IMR-90 (cell line): ENCODE measurements at regions of chr1 and their contacts with region 1.

Region 1: GRCh38 chr1:212477014-212477679 is 44.4 kb downstream of the NENF start:
- DNase-seq: peak; percentile 86
- ATAC-seq: peak; percentile 98
- H3K4me3 ChIP-seq: no peak overlapping the region
- H3K27ac ChIP-seq: no peak overlapping the region
- H3K4me1 ChIP-seq: peaks cover 3% of the 10 kb centered on the region
- H3K27me3 ChIP-seq: peaks cover 4% of the 10 kb centered on the region; the same call in 1 of the 2 replicates
- CTCF ChIP-seq: peak; percentile 95
- POLR2A ChIP-seq: peak; percentile 56
- RAD21 ChIP-seq: peak; percentile 97

Region 2: GRCh38 chr1:212558693-212559480 is 81.7 kb after region 1 on chr1:
- CTCF ChIA-PET with region 1: no interaction called
- POLR2A ChIA-PET with region 1: no interaction called
- dilution Hi-C with region 1: no loop called
- in situ Hi-C with region 1: no loop called
- intact Hi-C with region 1: loop called (anchors 5 kb)
- DNase-seq: peak; percentile 93
- ATAC-seq: peak; percentile 87
- H3K4me3 ChIP-seq: peak overlapping the region; percentile 56
- H3K27ac ChIP-seq: peak overlapping the region; percentile 73
- H3K4me1 ChIP-seq: peaks cover 9% of the 10 kb centered on the region
- H3K27me3 ChIP-seq: no peaks in the 10 kb centered on the region
- CTCF ChIP-seq: 0 out of 2 replicates have a peak, but pooled peaks have one; percentile 3
- POLR2A ChIP-seq: peak; percentile 63; the same call in 1 of the 2 replicates
- RAD21 ChIP-seq: peak; percentile 8; the same call in 1 of the 2 replicates

Region 3: DNA sequence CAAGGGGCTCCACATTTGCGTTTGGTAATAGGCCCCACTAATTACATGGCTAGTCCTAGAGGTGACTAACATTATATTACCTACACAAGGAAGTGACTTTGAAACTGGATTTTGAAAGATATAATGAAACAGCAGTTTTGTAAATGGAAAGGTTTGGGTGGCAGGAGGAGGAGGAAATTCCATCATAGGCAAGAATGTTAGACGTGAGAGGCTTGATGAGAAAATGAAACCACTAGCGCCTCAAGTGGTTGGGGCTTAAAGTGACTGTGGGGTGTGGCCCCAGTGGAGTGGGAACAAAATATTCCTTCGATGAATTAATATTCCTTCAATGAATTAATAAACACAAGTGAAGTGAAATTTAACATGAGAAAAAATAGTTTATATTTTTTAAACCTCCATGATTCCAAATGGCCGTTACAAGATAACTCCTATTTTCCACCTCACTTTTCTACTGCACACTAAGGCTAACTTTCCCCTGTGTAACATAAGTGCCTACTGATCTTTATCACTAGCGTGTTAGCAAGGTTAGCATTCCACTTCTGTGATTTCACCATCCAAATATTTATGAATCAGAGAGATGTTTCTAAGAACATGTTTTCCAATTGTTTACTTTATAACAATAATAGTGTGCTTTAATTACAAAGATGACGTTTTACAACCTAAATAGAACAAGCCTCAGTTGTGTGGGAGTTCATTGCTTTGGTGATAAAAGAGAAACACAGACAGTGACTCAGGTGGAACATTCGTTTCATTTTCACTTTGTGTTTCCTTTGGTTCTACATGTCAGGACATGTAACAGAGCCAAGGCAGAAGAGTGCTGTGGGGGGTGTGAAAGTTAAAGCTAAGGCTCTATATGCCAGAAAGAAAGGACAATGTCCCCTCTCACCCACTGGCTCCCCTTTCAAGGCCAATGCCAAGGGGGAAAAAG is 118.9 kb after region 1 on chr1:
- CTCF ChIA-PET with region 1: no interaction called
- POLR2A ChIA-PET with region 1: no interaction called
- dilution Hi-C with region 1: no loop called
- in situ Hi-C with region 1: loop called (anchors 5 kb)
- intact Hi-C with region 1: loop called (anchors 1 kb)
- DNase-seq: peak; percentile 99
- ATAC-seq: peak; percentile 90
- H3K4me3 ChIP-seq: peak overlapping the region; percentile 31; the same call in 1 of the 2 replicates
- H3K27ac ChIP-seq: peak overlapping the region; percentile 98
- H3K4me1 ChIP-seq: peaks cover 10% of the 10 kb centered on the region
- H3K27me3 ChIP-seq: peaks cover 9% of the 10 kb centered on the region
- CTCF ChIP-seq: peak; percentile 75
- POLR2A ChIP-seq: peak; percentile 14; the same call in 1 of the 2 replicates
- RAD21 ChIP-seq: peak; percentile 68

Region 4: DNA sequence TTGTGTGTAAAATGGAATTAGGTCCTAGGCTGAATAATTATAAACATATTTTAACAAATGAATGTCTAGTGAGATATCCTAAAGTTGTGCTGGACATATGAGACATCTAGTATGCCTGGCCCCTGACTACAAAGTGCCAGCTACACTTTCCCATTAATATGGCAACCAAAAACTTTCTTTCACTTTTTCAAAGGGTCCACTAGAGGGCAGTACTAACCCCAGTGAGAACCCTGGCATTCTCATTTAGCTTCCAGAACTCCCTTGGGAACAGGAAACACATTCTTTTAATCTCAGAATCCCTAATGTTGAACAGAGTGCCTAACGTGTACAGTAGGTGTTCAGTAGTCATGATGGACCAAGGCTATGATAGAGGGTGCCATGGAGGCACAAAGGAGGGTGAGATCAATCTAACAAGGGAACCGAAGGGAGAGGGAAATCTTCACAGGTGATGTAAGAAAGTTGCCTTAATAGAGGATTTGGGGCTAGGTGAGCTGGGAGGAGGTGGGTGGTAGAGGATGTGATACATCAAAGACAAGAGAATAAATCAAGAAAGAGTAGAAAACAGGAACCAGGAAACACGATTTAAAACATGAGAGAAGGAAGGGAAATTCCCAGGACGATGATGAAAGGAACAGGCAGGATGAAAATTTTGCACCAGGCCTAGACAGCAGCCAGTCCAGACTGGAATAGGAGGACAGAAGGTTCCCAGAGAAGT is 272.8 kb after region 1 on chr1:
- CTCF ChIA-PET with region 1: no interaction called
- POLR2A ChIA-PET with region 1: no interaction called
- dilution Hi-C with region 1: no loop called
- in situ Hi-C with region 1: no loop called
- intact Hi-C with region 1: loop called (anchors 10 kb)
- DNase-seq: peak; percentile 79
- ATAC-seq: peak; percentile 85
- H3K4me3 ChIP-seq: no peak overlapping the region
- H3K27ac ChIP-seq: peak overlapping the region; percentile 78; the same call in 1 of the 2 replicates
- H3K4me1 ChIP-seq: peaks cover 8% of the 10 kb centered on the region
- H3K27me3 ChIP-seq: no peaks in the 10 kb centered on the region
- CTCF ChIP-seq: peak; percentile 73
- POLR2A ChIP-seq: no peak
- RAD21 ChIP-seq: peak; percentile 60

Region 5: GRCh38 chr1:212777151-212777550 is 300.0 kb after region 1 on chr1:
- CTCF ChIA-PET with region 1: interaction called, 4 read pairs
- POLR2A ChIA-PET with region 1: no interaction called
- dilution Hi-C with region 1: no loop called
- in situ Hi-C with region 1: loop called (anchors 5 kb)
- intact Hi-C with region 1: loop called (anchors 1 kb)
- DNase-seq: no peak
- ATAC-seq: no peak
- H3K4me3 ChIP-seq: no peak overlapping the region
- H3K27ac ChIP-seq: no peak overlapping the region
- H3K4me1 ChIP-seq: peaks cover 3% of the 10 kb centered on the region; the same call in 1 of the 2 replicates
- H3K27me3 ChIP-seq: no peaks in the 10 kb centered on the region
- CTCF ChIP-seq: no peak
- POLR2A ChIP-seq: no peak
- RAD21 ChIP-seq: no peak

Region 6: DNA sequence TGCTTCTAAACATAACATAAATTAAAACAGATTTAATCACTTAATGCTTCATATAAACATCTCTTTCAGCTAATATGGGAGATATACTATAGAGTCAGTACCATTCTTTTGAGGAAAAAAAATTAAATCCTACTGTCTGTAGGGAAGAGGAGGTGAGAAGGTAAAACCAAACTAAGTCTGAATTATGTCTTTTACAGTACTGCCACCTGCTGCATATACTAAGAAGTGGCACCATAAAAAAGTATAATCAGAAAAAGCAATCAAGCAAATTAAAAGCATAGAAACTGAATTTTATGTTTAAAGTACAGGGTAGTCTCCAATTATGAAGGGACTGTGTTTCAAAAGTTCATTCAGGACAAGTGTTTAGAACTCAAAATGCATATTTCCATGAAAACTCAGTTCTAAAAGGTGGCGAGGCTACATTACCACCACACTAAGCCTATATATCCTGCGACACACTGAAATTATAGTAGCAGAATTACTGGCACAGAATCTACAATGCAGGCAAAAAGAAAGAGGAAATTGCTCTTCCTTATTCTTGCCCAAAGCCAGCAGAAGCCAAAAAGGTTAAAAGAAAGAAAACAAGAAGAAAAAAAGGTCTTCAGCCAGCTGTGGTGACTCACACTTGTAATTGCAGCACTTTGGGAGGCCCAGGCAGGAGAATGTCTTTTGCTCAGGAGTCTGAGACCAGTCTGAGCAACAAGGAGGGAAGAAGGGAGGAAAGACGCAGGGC is 305.4 kb after region 1 on chr1:
- CTCF ChIA-PET with region 1: interaction called, 6 read pairs
- POLR2A ChIA-PET with region 1: no interaction called
- dilution Hi-C with region 1: no loop called
- in situ Hi-C with region 1: loop called (anchors 5 kb)
- intact Hi-C with region 1: loop called (anchors 1 kb)
- DNase-seq: peak; percentile 69
- ATAC-seq: peak; percentile 81
- H3K4me3 ChIP-seq: no peak overlapping the region
- H3K27ac ChIP-seq: no peak overlapping the region
- H3K4me1 ChIP-seq: 0 out of 2 replicates have a peak, but pooled peaks cover 2% of the 10 kb centered on the region
- H3K27me3 ChIP-seq: no peaks in the 10 kb centered on the region
- CTCF ChIP-seq: peak; percentile 72
- POLR2A ChIP-seq: no peak
- RAD21 ChIP-seq: peak; percentile 77

Region 7: GRCh38 chr1:212990276-212990675 is 513.1 kb after region 1 on chr1:
- CTCF ChIA-PET with region 1: no interaction called
- POLR2A ChIA-PET with region 1: no interaction called
- dilution Hi-C with region 1: no loop called
- in situ Hi-C with region 1: no loop called
- intact Hi-C with region 1: loop called (anchors 1 kb)
- DNase-seq: no peak
- ATAC-seq: no peak
- H3K4me3 ChIP-seq: no peak overlapping the region
- H3K27ac ChIP-seq: no peak overlapping the region
- H3K4me1 ChIP-seq: peaks cover 6% of the 10 kb centered on the region
- H3K27me3 ChIP-seq: no peaks in the 10 kb centered on the region
- CTCF ChIP-seq: no peak
- POLR2A ChIP-seq: no peak
- RAD21 ChIP-seq: no peak